ENCODE measurements at regions of chr4 and their contacts with region 1.

Region 1: DNA sequence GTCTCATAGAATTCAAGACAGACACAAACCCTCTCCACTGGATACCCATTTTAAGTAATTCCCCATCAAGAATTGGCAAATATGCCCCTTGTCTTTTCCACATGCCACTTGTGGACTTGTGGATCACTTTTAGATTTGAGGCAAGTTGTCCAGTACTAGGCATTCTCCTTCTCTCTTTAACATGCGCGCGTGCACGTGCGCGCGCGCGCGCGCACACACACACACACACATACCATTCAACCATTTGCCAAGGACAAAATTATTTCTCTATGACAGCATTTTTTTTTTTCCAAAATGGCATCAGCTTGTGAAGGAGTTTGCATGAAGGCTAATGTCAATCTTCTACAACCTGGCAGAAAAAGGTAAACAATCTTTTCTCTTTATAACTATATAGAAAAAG is 1325.7 kb upstream of the IGFBP7 start:
- DNase-seq: no peak
- H3K4me3 ChIP-seq: no peak overlapping the region
- H3K27ac ChIP-seq: no peak overlapping the region
- H3K4me1 ChIP-seq: no peaks in the 10 kb centered on the region
- H3K27me3 ChIP-seq: no peaks in the 10 kb centered on the region
- CTCF ChIP-seq: no peak
- EP300 ChIP-seq: no peak
- POLR2A ChIP-seq: no peak

Region 2: GRCh38 chr4:58451707-58452106 is 15.8 kb after region 1 on chr4:
- in situ Hi-C with region 1: no loop called
- intact Hi-C with region 1: loop called (anchors 2 kb)
- DNase-seq: no peak
- H3K4me3 ChIP-seq: no peak overlapping the region
- H3K27ac ChIP-seq: no peak overlapping the region
- H3K4me1 ChIP-seq: no peaks in the 10 kb centered on the region
- H3K27me3 ChIP-seq: no peaks in the 10 kb centered on the region
- CTCF ChIP-seq: no peak
- EP300 ChIP-seq: no peak
- POLR2A ChIP-seq: no peak

Region 3: GRCh38 chr4:58475097-58475496 is 39.2 kb after region 1 on chr4:
- in situ Hi-C with region 1: no loop called
- intact Hi-C with region 1: no loop called
- DNase-seq: no peak
- H3K4me3 ChIP-seq: no peak overlapping the region
- H3K27ac ChIP-seq: no peak overlapping the region
- H3K4me1 ChIP-seq: no peaks in the 10 kb centered on the region
- H3K27me3 ChIP-seq: no peaks in the 10 kb centered on the region
- CTCF ChIP-seq: no peak
- EP300 ChIP-seq: no peak
- POLR2A ChIP-seq: no peak